ENCODE measurements at regions of chr1 and their contacts with region 1.

Region 1: DNA sequence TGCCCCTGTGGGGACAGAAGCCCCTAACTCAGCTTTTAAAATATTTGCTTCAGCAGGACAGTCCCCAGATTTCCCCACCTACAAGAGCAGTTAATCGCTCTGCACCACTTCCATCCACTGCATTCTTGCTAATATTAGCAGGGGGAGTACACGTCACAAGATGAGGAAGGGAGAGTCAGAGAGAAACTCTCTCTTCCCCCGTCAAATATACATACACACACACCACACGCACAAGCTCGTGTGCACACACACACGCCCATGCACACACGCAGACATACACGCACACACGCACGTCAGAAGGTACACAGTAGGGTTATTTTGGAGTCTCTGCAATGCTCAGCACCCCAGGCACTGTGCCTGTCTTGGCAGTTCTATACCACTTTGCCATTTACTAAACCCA is 2.1 kb downstream of the CLCA1 start:
- DNase-seq: no peak
- ATAC-seq: no peak
- H3K4me3 ChIP-seq: no peak overlapping the region
- H3K4me3 Mint-ChIP-seq: no peak overlapping the region
- H3K27ac ChIP-seq: no peak overlapping the region
- H3K27ac Mint-ChIP-seq: no peak overlapping the region
- H3K4me1 ChIP-seq: no peaks in the 10 kb centered on the region
- H3K4me1 Mint-ChIP-seq: peaks cover 4% of the 10 kb centered on the region
- H3K27me3 ChIP-seq: peaks cover 0 to 3% (median 0%) of the 10 kb centered on the region in 4 experiments
- H3K27me3 Mint-ChIP-seq: peaks cover 13% of the 10 kb centered on the region
- CTCF ChIP-seq: no peak

Region 2: GRCh38 chr1:86507935-86508582 is 37.2 kb after region 1 on chr1:
- CTCF ChIA-PET with region 1: interaction called, 21 read pairs
- POLR2A ChIA-PET with region 1: no interaction called
- intact Hi-C with region 1: no loop called
- DNase-seq: peak; percentile 41
- ATAC-seq: no peak
- H3K4me3 ChIP-seq: no peak overlapping the region
- H3K4me3 Mint-ChIP-seq: no peak overlapping the region
- H3K27ac ChIP-seq: no peak overlapping the region
- H3K27ac Mint-ChIP-seq: no peak overlapping the region
- H3K4me1 ChIP-seq: peaks cover 0 to 12% of the 10 kb centered on the region in 2 donors
- H3K4me1 Mint-ChIP-seq: no peaks in the 10 kb centered on the region
- H3K27me3 ChIP-seq: peaks cover 0 to 6% (median 2%) of the 10 kb centered on the region in 4 experiments
- H3K27me3 Mint-ChIP-seq: peaks cover 25% of the 10 kb centered on the region
- CTCF ChIP-seq: peak; percentile 62

Region 3: GRCh38 chr1:86648255-86648654 is 177.4 kb after region 1 on chr1:
- CTCF ChIA-PET with region 1: interaction called, 13 read pairs
- POLR2A ChIA-PET with region 1: no interaction called
- intact Hi-C with region 1: no loop called
- DNase-seq: no peak
- ATAC-seq: no peak
- H3K4me3 ChIP-seq: no peak overlapping the region
- H3K4me3 Mint-ChIP-seq: no peak overlapping the region
- H3K27ac ChIP-seq: no peak overlapping the region
- H3K27ac Mint-ChIP-seq: no peak overlapping the region
- H3K4me1 ChIP-seq: peaks cover 0 to 3% of the 10 kb centered on the region in 2 donors
- H3K4me1 Mint-ChIP-seq: peaks cover 13% of the 10 kb centered on the region
- H3K27me3 ChIP-seq: no peaks in the 10 kb centered on the region
- H3K27me3 Mint-ChIP-seq: no peaks in the 10 kb centered on the region
- CTCF ChIP-seq: no peak

Region 4: DNA sequence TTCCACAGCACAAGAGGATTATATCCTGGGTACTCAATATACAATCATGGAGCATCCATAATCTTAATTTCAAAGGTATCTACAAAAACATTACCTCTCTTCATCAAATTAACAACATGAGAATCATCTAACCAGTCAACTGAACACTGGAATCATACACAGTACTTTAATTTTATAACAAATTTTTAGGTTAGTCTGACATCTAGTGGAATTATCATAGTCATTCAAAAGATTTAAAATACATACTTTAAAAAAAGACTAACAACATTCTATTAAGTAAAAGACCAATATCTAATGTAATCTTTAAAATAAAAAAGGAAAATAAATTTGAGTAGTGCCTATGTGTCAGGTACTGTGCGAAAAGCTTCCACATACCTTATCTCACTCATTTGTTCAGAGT is 216.7 kb after region 1 on chr1:
- CTCF ChIA-PET with region 1: interaction called, 67 read pairs
- POLR2A ChIA-PET with region 1: no interaction called
- intact Hi-C with region 1: loop called (anchors 10 kb)
- DNase-seq: peak; percentile 41
- ATAC-seq: peak; percentile 51
- H3K4me3 ChIP-seq: no peak overlapping the region
- H3K4me3 Mint-ChIP-seq: no peak overlapping the region
- H3K27ac ChIP-seq: no peak overlapping the region
- H3K27ac Mint-ChIP-seq: no peak overlapping the region
- H3K4me1 ChIP-seq: no peaks in the 10 kb centered on the region
- H3K4me1 Mint-ChIP-seq: no peaks in the 10 kb centered on the region
- H3K27me3 ChIP-seq: no peaks in the 10 kb centered on the region
- H3K27me3 Mint-ChIP-seq: no peaks in the 10 kb centered on the region
- CTCF ChIP-seq: peak; percentile 71

Region 5: DNA sequence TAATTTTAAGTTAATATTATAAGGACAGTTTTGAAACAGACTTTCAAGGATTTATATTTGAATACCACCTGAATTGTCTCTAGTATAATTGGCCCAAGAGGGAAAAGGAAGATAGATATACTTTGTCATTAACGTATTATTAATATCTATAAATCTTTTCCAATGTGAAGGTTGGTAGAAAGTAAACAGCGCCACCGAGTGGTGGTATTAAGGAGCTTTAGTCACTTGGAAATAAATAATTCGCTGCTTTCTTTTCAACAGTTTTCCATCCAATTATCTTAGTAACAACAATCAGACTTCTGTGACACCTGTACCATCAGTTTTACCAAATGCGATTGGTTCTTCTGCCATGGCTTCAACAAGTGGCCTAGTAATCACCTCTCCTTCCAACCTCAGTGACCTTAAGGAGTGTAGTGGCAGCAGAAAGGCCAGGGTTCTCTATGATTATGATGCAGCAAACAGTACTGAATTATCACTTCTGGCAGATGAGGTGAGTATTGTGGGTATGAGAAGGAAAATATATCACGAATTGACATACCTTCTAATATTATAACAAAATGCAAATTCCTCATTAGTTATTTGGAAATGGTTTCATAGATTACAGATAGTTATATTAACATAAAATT is 271.2 kb after region 1 on chr1:
- CTCF ChIA-PET with region 1: interaction called, 3 read pairs
- POLR2A ChIA-PET with region 1: no interaction called
- intact Hi-C with region 1: loop called (anchors 5 kb)
- DNase-seq: peak; percentile 50
- ATAC-seq: no peak
- H3K4me3 ChIP-seq: no peak overlapping the region
- H3K4me3 Mint-ChIP-seq: no peak overlapping the region
- H3K27ac ChIP-seq: no peak overlapping the region
- H3K27ac Mint-ChIP-seq: no peak overlapping the region
- H3K4me1 ChIP-seq: peaks cover 7 to 10% of the 10 kb centered on the region in 2 donors
- H3K4me1 Mint-ChIP-seq: no peaks in the 10 kb centered on the region
- H3K27me3 ChIP-seq: no peaks in the 10 kb centered on the region
- H3K27me3 Mint-ChIP-seq: no peaks in the 10 kb centered on the region
- CTCF ChIP-seq: peak; percentile 88

Measured in B cell (primary cell).